MCF 10A (cell line): ENCODE measurements at regions of chr7 and their contacts with region 1.

Region 1: GRCh38 chr7:134632937-134633540 is 13.6 kb upstream of the BPGM start:
- DNase-seq: peak; percentile 61
- H3K4me3 Mint-ChIP-seq: no peak overlapping the region
- H3K27ac Mint-ChIP-seq: no peak overlapping the region
- H3K4me1 Mint-ChIP-seq: peaks cover 14% of the 10 kb centered on the region
- H3K27me3 Mint-ChIP-seq: no peaks in the 10 kb centered on the region
- CTCF ChIP-seq: peak; percentile 73

Region 2: GRCh38 chr7:133827707-133828623 is 805.1 kb before region 1 on chr7:
- CTCF ChIA-PET with region 1: no interaction called
- POLR2A ChIA-PET with region 1: no interaction called
- intact Hi-C with region 1: no loop called
- DNase-seq: peak; percentile 13
- H3K4me3 Mint-ChIP-seq: no peak overlapping the region
- H3K27ac Mint-ChIP-seq: no peak overlapping the region
- H3K4me1 Mint-ChIP-seq: no peaks in the 10 kb centered on the region
- H3K27me3 Mint-ChIP-seq: no peaks in the 10 kb centered on the region
- CTCF ChIP-seq: no peak

Region 3: GRCh38 chr7:134619627-134620331 is 13.3 kb before region 1 on chr7:
- CTCF ChIA-PET with region 1: interaction called, 25 read pairs
- POLR2A ChIA-PET with region 1: interaction called, 7 read pairs
- intact Hi-C with region 1: no loop called
- DNase-seq: peak; percentile 92
- H3K4me3 Mint-ChIP-seq: no peak overlapping the region
- H3K27ac Mint-ChIP-seq: peak overlapping the region; percentile 94
- H3K4me1 Mint-ChIP-seq: peaks cover 58% of the 10 kb centered on the region
- H3K27me3 Mint-ChIP-seq: no peaks in the 10 kb centered on the region
- CTCF ChIP-seq: no peak

Region 4: DNA sequence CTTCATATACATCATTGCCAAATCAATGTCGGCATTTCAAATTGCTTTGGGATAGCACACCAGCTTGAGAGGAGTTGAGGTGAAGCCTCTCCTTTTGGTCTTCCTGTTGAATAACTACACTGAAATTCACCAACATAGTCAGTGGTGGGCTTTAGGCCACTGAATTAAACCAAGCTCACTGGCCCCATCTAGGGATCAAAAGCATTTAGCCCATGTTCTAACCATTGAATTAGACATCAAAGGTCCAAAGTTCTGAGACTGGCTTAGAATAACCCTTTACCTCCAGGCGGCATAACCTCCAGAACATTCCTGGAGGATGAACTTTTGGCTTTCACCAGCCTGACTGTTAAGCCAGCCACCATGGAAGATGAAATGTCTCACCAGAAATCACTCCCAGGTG is 68.2 kb after region 1 on chr7:
- CTCF ChIA-PET with region 1: no interaction called
- POLR2A ChIA-PET with region 1: no interaction called
- intact Hi-C with region 1: loop called (anchors 1 kb)
- DNase-seq: peak; percentile 49
- H3K4me3 Mint-ChIP-seq: no peak overlapping the region
- H3K27ac Mint-ChIP-seq: no peak overlapping the region
- H3K4me1 Mint-ChIP-seq: no peaks in the 10 kb centered on the region
- H3K27me3 Mint-ChIP-seq: peaks cover 10% of the 10 kb centered on the region
- CTCF ChIP-seq: peak; percentile 28

Region 5: DNA sequence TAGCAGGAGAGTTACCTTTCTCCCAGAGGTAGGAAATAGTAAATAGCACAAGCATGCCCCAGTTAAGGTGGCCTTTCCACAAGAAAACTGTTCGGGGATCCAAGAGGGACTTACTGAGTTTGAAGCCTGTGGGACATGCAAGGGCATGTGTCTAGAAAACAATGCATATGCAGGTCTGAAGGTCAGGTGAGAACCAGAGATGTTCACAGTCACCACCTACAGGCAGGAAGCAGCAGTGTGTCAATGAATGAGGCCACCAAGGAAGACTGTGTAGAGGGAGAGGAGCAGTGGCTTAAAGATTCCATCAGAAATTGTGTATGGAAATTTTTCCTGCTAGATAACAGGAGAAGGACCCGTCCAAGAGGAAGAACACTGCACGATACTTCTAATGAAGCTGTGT is 212.4 kb after region 1 on chr7:
- CTCF ChIA-PET with region 1: no interaction called
- POLR2A ChIA-PET with region 1: no interaction called
- intact Hi-C with region 1: loop called (anchors 2 kb)
- DNase-seq: peak; percentile 66
- H3K4me3 Mint-ChIP-seq: peak overlapping the region; percentile 30
- H3K27ac Mint-ChIP-seq: peak overlapping the region; percentile 92
- H3K4me1 Mint-ChIP-seq: peaks cover 14% of the 10 kb centered on the region
- H3K27me3 Mint-ChIP-seq: no peaks in the 10 kb centered on the region
- CTCF ChIP-seq: peak; percentile 43

Region 6: GRCh38 chr7:134954197-134955082 is 321.4 kb after region 1 on chr7:
- CTCF ChIA-PET with region 1: interaction called, 11 read pairs
- POLR2A ChIA-PET with region 1: no interaction called
- intact Hi-C with region 1: loop called (anchors 1 kb)
- DNase-seq: peak; percentile 46
- H3K4me3 Mint-ChIP-seq: no peak overlapping the region
- H3K27ac Mint-ChIP-seq: peak overlapping the region; percentile 43
- H3K4me1 Mint-ChIP-seq: no peaks in the 10 kb centered on the region
- H3K27me3 Mint-ChIP-seq: no peaks in the 10 kb centered on the region
- CTCF ChIP-seq: peak; percentile 58

Region 7: GRCh38 chr7:135160098-135160857 is 527.2 kb after region 1 on chr7:
- CTCF ChIA-PET with region 1: no interaction called
- POLR2A ChIA-PET with region 1: no interaction called
- intact Hi-C with region 1: no loop called
- DNase-seq: no peak
- H3K4me3 Mint-ChIP-seq: no peak overlapping the region
- H3K27ac Mint-ChIP-seq: peak overlapping the region; percentile 4
- H3K4me1 Mint-ChIP-seq: peaks cover 11% of the 10 kb centered on the region
- H3K27me3 Mint-ChIP-seq: no peaks in the 10 kb centered on the region
- CTCF ChIP-seq: no peak